ENCODE measurements at regions of chr12 and their contacts with region 1.

Region 1: GRCh38 chr12:117367011-117367638 is 5.7 kb upstream of the NOS1 start:
- DNase-seq: peak; percentile 36 to 83
- H3K4me3 ChIP-seq: no peak overlapping the region
- H3K4me1 ChIP-seq: no peaks in the 10 kb centered on the region
- H3K27me3 ChIP-seq: peaks cover 20% of the 10 kb centered on the region

Region 2: GRCh38 chr12:117587631-117588287 is 220.6 kb after region 1 on chr12:
- in situ Hi-C with region 1: loop called (anchors 5 kb)
- DNase-seq: peak; percentile 40 to 74
- H3K4me3 ChIP-seq: no peak overlapping the region
- H3K4me1 ChIP-seq: no peaks in the 10 kb centered on the region
- H3K27me3 ChIP-seq: peaks cover 7% of the 10 kb centered on the region; the same call in 1 of the 2 replicates

Region 3: GRCh38 chr12:117836999-117837736 is 470.0 kb after region 1 on chr12:
- in situ Hi-C with region 1: loop called (anchors 5 kb)
- DNase-seq: peak; percentile 58 to 86
- H3K4me3 ChIP-seq: no peak overlapping the region
- H3K4me1 ChIP-seq: no peaks in the 10 kb centered on the region
- H3K27me3 ChIP-seq: peaks cover 8% of the 10 kb centered on the region; the same call in 1 of the 2 replicates